Aorta (tissue), 5 donors: ENCODE measurements at regions of chr6 and their contacts with region 1.

Region 1: GRCh38 chr6:30883685-30884520 is at the start of gene DDR1:
- DNase-seq: peak; percentile 85 to 90
- ATAC-seq: peak; percentile 87
- H3K4me3 ChIP-seq: peak within 1 kb of the TSS; percentile 64 to 96
- H3K27ac ChIP-seq: peak within 1 kb of the TSS in 1 of 2 donors; percentile 50
- H3K4me1 ChIP-seq: no peaks in the 10 kb centered on the region
- H3K27me3 ChIP-seq: no peaks in the 10 kb centered on the region
- total RNA-seq, gene DDR1: 29.5 to 32.0 TPM

Region 2: DNA sequence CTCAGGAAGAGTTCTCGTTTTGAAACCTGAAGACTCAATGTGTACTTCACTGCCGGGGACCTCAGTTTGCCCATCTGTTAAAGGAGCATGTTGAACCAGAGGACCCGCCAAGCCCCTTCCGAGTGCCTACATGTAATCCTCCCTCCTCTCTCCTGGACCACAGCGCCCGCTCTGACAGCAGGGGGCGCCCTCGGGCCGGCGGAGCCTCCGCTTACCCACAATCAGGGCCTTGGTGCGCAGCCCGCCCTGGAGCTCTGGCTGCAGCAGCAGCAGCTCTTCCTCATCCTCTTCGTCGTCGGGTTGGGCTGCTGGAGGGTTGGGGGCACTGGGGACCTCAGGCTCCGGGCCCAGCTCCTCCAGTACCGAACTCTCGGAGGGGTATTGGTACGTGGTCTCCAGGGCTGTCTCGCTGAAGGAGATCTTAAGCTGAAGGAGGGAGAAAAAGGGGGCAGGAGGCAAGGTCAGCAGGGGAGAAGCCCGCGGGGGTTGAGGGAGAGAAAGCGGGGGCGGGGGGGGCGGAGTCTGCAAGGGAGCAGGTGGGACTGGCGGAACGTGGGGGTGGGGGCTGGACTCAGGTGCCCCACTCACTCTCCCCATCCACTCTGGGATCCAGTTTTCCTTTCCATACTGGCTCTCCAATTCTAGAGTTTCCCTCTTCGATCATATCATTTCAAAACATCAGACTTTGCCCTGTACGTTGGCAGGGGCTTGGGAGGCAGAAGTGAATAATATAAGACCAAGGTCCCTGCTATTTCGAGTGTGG is 204.8 kb before region 1 on chr6:
- intact Hi-C with region 1: loop called (anchors 5 to 10 kb)
- DNase-seq: peak; percentile 91 to 96
- ATAC-seq: peak; percentile 89
- H3K4me3 ChIP-seq: no peak overlapping the region
- H3K27ac ChIP-seq: peak overlapping the region; percentile 45 to 49
- H3K4me1 ChIP-seq: peaks cover 0 to 2% of the 10 kb centered on the region in 2 donors
- H3K27me3 ChIP-seq: no peaks in the 10 kb centered on the region